ENCODE measurements at regions of chr20 and their contacts with region 1.

Region 1: GRCh38 chr20:34190679-34191090 is 50.5 kb upstream of the ASIP start:
- DNase-seq: peak; percentile 79
- H3K4me3 Mint-ChIP-seq: no peak overlapping the region
- H3K27ac Mint-ChIP-seq: no peak overlapping the region
- H3K4me1 Mint-ChIP-seq: no peaks in the 10 kb centered on the region
- H3K27me3 Mint-ChIP-seq: peaks cover 38% of the 10 kb centered on the region
- CTCF ChIP-seq: peak; percentile 85

Region 2: GRCh38 chr20:34249291-34249690 is 58.6 kb after region 1 on chr20:
- CTCF ChIA-PET with region 1: interaction called, 14 read pairs
- POLR2A ChIA-PET with region 1: interaction called, 3 read pairs
- intact Hi-C with region 1: loop called (anchors 2 kb)
- DNase-seq: peak; percentile 37
- H3K4me3 Mint-ChIP-seq: no peak overlapping the region
- H3K27ac Mint-ChIP-seq: no peak overlapping the region
- H3K4me1 Mint-ChIP-seq: peaks cover 5% of the 10 kb centered on the region
- H3K27me3 Mint-ChIP-seq: no peaks in the 10 kb centered on the region
- CTCF ChIP-seq: no peak

Region 3: GRCh38 chr20:34260208-34260942 is 69.7 kb after region 1 on chr20:
- CTCF ChIA-PET with region 1: interaction called, 16 read pairs
- POLR2A ChIA-PET with region 1: no interaction called
- intact Hi-C with region 1: no loop called
- DNase-seq: no peak
- H3K4me3 Mint-ChIP-seq: no peak overlapping the region
- H3K27ac Mint-ChIP-seq: no peak overlapping the region
- H3K4me1 Mint-ChIP-seq: peaks cover 10% of the 10 kb centered on the region
- H3K27me3 Mint-ChIP-seq: no peaks in the 10 kb centered on the region
- CTCF ChIP-seq: no peak

Region 4: GRCh38 chr20:34302723-34303528 is 112.2 kb after region 1 on chr20 and contains the start of gene AHCY:
- CTCF ChIA-PET with region 1: interaction called, 5 read pairs
- POLR2A ChIA-PET with region 1: interaction called, 11 read pairs
- intact Hi-C with region 1: loop called (anchors 2 kb)
- DNase-seq: peak; percentile 98
- H3K4me3 Mint-ChIP-seq: no peak within 1 kb of the TSS
- H3K27ac Mint-ChIP-seq: peak within 1 kb of the TSS; percentile 83
- H3K4me1 Mint-ChIP-seq: no peaks in the 10 kb centered on the region
- H3K27me3 Mint-ChIP-seq: no peaks in the 10 kb centered on the region
- CTCF ChIP-seq: no peak
- total RNA-seq, gene AHCY: 101 and 175 TPM in 2 replicates

Region 5: DNA sequence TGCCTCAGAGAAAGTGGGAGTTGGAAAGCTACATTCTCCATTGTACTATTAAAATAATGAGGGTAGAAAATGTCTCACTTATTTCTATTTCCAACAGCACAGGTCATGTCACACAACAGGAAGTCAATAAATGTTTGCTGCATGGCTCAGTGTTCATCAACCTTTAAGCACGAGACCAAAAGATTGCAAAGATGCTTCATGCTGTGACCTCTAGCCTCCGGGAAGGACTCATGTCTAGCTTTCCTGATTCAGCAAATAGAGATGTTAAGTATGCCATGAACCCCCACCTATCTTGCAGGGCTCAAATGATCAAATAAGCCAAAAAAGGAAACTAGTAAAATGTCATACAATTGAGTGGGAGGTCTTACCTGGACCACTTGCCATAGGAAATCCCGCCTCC is 577.4 kb after region 1 on chr20:
- CTCF ChIA-PET with region 1: interaction called, 7 read pairs
- POLR2A ChIA-PET with region 1: no interaction called
- intact Hi-C with region 1: loop called (anchors 2 kb)
- DNase-seq: no peak
- H3K4me3 Mint-ChIP-seq: no peak overlapping the region
- H3K27ac Mint-ChIP-seq: no peak overlapping the region
- H3K4me1 Mint-ChIP-seq: peaks cover 6% of the 10 kb centered on the region
- H3K27me3 Mint-ChIP-seq: no peaks in the 10 kb centered on the region
- CTCF ChIP-seq: no peak